GM10248 (cell line): ENCODE measurements at regions of chr9 and their contacts with region 1.

Region 1: DNA sequence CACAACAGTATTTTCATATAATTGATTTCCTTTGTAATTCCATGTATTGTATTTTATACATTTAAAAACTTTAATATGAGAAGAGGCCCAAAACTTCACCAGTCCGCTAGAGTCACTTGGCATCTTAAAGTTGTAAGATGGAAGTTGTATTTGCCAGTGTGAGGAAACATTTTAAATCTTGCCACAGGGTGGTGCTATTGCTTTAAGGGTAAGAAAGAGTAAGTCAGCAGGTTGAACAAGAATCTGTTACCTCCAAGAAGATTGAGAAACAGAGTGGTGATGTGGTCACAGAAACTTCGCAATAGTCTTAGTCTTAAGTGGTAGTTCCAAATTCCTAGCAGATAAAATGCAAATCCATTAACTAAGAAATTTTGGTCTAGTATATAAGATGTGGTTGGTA is 39.8 kb upstream of the RANBP6 start:
- DNase-seq: peak; percentile 29
- CTCF ChIP-seq: peak; percentile 57

Region 2: GRCh38 chr9:6008169-6008979 is 46.8 kb before region 1 on chr9:
- CTCF ChIA-PET with region 1: interaction called, 11 read pairs
- POLR2A ChIA-PET with region 1: no interaction called
- DNase-seq: peak; percentile 92
- CTCF ChIP-seq: no peak

Region 3: DNA sequence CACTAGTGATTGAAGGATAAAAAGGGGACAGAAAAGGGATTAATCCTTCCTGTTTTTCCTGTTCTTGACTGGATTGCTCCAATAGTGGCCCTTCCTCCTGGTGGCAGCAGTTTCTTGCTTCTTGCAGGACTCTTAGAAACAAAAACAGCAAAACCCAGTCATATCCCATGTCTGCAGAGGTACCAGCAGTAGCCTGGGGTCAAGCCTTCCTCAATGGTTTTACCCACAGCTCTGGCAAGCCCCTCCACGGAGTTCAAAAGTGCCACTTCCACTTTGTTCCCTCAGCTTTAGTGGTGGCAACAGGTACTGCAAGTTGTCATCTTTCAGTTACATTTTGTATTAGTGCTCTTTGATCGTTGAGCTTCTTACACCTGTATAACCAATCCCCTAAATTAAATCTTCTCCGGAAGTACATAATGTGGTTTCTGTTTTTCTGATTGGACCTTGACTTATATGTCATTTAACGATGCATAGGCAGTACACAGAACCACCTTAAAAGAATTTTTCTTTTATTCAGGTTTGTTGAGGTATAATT is 31.1 kb before region 1 on chr9:
- CTCF ChIA-PET with region 1: interaction called, 22 read pairs
- POLR2A ChIA-PET with region 1: no interaction called
- DNase-seq: peak; percentile 41
- CTCF ChIP-seq: peak; percentile 17

Region 4: DNA sequence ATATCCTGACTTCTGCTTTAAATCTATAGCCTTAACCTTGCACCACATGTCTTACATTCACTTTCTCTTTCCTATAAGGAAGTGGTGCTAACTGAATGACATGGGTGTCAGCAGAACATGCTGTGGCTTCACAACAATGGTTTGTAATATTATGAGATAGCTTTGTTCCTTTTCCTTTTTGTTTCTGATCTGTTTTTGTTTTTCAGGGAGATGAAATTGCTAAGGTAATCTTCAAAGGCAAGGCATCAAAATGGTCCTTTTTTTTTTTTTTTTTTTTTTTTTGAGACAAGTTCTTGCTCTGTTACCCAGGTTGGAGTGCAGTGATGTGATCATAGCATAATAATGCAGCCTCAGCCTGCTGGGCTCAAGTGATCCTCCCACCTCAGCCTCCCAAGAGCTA is 13.8 kb after region 1 on chr9:
- CTCF ChIA-PET with region 1: interaction called, 24 read pairs
- POLR2A ChIA-PET with region 1: interaction called, 12 read pairs
- DNase-seq: peak; percentile 74
- CTCF ChIP-seq: no peak

Region 5: GRCh38 chr9:6096821-6097220 is 41.6 kb after region 1 on chr9:
- CTCF ChIA-PET with region 1: no interaction called
- POLR2A ChIA-PET with region 1: no interaction called
- DNase-seq: no peak
- CTCF ChIP-seq: no peak

Region 6: DNA sequence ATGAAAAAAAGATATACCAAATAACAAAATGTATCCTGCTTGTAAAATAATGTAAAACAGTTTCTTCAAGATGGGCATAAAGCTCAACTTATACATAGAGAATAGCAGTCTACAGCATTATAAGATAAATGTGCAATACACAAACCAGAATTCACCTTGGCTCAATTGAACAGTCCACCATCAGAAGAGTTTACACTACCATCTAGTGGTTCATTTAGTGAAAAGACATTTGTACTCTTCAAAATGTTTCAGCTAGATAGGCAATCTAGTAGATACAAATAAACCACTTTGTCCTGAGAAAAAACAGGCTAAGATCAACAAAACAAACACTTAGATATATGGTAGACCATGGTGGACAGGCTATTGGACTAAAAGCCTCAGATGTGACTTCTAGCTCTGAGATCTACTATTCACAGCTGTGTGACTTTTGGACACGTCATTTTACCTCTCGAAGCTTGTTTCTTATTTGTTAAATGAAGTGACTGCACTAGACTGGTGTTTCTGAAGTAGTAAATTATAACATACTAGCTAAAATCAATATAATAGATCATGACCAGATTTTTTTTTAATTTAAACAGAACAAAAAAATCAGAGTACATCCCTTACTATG is 250.8 kb after region 1 on chr9:
- CTCF ChIA-PET with region 1: interaction called, 48 read pairs
- POLR2A ChIA-PET with region 1: no interaction called
- DNase-seq: peak; percentile 42
- CTCF ChIP-seq: peak; percentile 50